ENCODE measurements at regions of chr1 and their contacts with region 1.

Region 1: GRCh38 chr1:201877877-201878401 is 10.8 kb upstream of the SHISA4 start:
- DNase-seq: peak in 1 of 2 donors; percentile 71
- H3K4me3 ChIP-seq: no peak overlapping the region
- H3K27ac ChIP-seq: peak overlapping the region; percentile 50 to 60
- H3K4me1 ChIP-seq: peaks cover 0 to 15% (median 10%) of the 10 kb centered on the region in 4 donors
- H3K27me3 ChIP-seq: no peaks in the 10 kb centered on the region
- CTCF ChIP-seq: peak; percentile 69 to 80

Region 2: GRCh38 chr1:201828820-201829774 is 48.8 kb before region 1 on chr1 and contains the start of gene IPO9:
- intact Hi-C with region 1: loop called (anchors 10 kb)
- DNase-seq: peak; percentile 93 to 97
- H3K4me3 ChIP-seq: peak within 1 kb of the TSS; percentile 94 to 99
- H3K27ac ChIP-seq: peak within 1 kb of the TSS; percentile 94 to 97
- H3K4me1 ChIP-seq: peaks cover 0 to 57% (median 33%) of the 10 kb centered on the region in 4 donors
- H3K27me3 ChIP-seq: no peaks in the 10 kb centered on the region
- CTCF ChIP-seq: peak; percentile 95 to 97

Region 3: GRCh38 chr1:201970334-201971159 is 92.6 kb after region 1 on chr1:
- intact Hi-C with region 1: loop called (anchors 2 kb)
- DNase-seq: no peak
- H3K4me3 ChIP-seq: no peak overlapping the region
- H3K27ac ChIP-seq: no peak overlapping the region
- H3K4me1 ChIP-seq: peaks cover 0 to 19% (median 6%) of the 10 kb centered on the region in 4 donors
- H3K27me3 ChIP-seq: no peaks in the 10 kb centered on the region
- CTCF ChIP-seq: no peak